GM12878 (cell line): ENCODE measurements at regions of chr1 and their contacts with region 1.

Region 1: DNA sequence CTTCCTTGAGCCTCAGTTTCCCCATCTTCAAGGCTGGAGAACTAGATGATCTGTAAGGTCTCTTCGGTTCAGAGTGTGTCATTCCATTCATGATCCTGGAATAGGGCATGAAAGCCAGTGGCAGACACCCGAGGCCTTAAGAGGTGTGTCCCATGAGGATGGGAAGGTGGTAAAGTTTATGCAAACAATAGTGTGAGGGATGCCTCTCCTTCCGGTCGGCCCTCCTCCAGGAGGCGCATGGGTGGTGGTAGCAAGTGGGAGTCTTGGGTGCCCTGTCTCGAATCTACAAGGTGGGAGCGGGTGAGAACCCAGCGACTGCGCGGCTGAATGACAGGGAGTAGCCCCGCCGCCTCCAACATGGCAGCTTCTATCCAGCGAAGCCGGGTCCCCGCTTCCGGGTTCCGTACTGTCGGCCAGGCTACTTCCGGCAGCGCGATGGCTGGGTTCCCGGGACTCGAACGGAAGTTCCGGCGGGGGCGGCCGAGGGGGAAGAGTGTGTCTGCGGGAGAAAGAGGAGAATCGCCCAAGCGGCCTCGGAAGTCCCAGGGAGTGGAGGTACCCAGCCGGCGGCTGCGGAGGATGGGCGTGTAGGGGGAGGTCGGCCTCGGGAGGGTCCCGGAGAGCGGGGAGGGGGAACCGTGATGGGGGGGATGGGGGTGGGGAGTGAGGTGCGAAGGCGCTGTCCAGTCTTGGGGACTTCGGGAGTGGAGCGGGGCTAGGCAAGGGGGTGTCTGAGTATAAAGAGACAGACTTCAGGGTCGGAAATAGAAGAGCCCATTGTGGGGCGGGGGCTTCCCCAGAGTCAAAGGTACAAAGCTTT is at the start of gene LYPLA2:
- DNase-seq: no peak
- ATAC-seq: peak; percentile 95
- H3K4me3 ChIP-seq: peak within 1 kb of the TSS; percentile 93
- H3K27ac ChIP-seq: peak within 1 kb of the TSS; percentile 71
- H3K4me1 ChIP-seq: 0 out of 2 replicates have a peak, but pooled peaks cover 5% of the 10 kb centered on the region
- H3K27me3 ChIP-seq: no peaks in the 10 kb centered on the region
- CTCF ChIP-seq: no peak
- EP300 ChIP-seq: no peak
- POLR2A ChIP-seq: peak; percentile 88
- RAD21 ChIP-seq: no peak
- polyA plus RNA-seq, gene LYPLA2: 2.7 to 5.9 TPM

Region 2: DNA sequence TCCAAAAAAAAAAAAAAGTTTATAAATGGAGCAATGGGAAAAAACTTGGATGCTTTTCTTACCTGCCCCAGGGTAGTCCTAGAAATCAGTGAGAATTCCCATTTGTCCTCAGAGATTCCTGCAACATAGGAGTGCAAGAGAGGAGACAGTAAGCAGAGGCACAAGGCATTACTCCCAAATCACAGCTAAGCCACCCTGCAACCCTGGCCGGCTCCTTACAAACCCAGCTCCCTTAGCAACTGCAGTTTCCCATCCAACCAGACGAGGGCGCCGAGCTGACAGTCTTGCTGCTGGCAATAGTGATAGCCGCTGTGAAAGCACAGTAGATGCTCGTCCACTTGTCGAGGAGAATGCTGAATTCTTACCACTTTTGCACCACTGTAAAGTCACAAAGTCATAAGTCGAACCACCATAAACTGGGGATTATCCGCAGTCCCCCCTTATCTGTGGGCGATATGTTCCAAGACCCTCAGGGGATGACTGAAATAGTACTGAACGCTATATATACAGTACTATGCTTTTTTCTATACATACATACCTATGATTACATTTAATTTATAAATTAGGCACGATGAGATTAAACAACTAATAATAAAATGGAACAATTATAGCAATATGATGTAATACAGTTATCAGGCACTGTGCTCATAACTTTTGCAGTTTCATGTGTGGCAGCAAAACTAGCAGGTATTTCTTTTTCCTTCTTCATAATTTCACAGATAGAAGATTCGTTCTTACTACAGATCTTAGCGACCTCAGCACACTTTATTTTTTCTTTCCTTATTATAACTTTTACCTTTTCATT is 18.7 kb before region 1 on chr1:
- CTCF ChIA-PET with region 1: interaction called, 10 read pairs
- POLR2A ChIA-PET with region 1: interaction called, 10 read pairs
- RAD21 ChIA-PET with region 1: interaction called, 7 read pairs
- SMC1A ChIA-PET with region 1: no interaction called
- in situ Hi-C with region 1: no loop called
- intact Hi-C with region 1: no loop called
- DNase-seq: peak; percentile 27
- ATAC-seq: peak; percentile 99
- H3K4me3 ChIP-seq: no peak overlapping the region
- H3K27ac ChIP-seq: no peak overlapping the region
- H3K4me1 ChIP-seq: peaks cover 12% of the 10 kb centered on the region
- H3K27me3 ChIP-seq: no peaks in the 10 kb centered on the region
- CTCF ChIP-seq: peak; percentile 97 to 98 (median 98); a peak in 5 of 6 replicates
- EP300 ChIP-seq: no peak
- POLR2A ChIP-seq: no peak
- RAD21 ChIP-seq: peak; percentile 91

Region 3: GRCh38 chr1:23777979-23778814 is 12.7 kb before region 1 on chr1 and contains the start of gene PITHD1:
- CTCF ChIA-PET with region 1: interaction called, 5 read pairs
- POLR2A ChIA-PET with region 1: interaction called, 10 read pairs
- RAD21 ChIA-PET with region 1: interaction called, 7 read pairs
- SMC1A ChIA-PET with region 1: interaction called, 4 read pairs
- in situ Hi-C with region 1: no loop called
- intact Hi-C with region 1: no loop called
- DNase-seq: peak; percentile 45
- ATAC-seq: peak; percentile 96
- H3K4me3 ChIP-seq: peak within 1 kb of the TSS; percentile 99
- H3K27ac ChIP-seq: peak within 1 kb of the TSS; percentile 82
- H3K4me1 ChIP-seq: peaks cover 10% of the 10 kb centered on the region; the same call in 1 of the 2 replicates
- H3K27me3 ChIP-seq: no peaks in the 10 kb centered on the region
- CTCF ChIP-seq: no peak
- EP300 ChIP-seq: no peak
- POLR2A ChIP-seq: peak; percentile 98
- RAD21 ChIP-seq: no peak
- polyA plus RNA-seq, gene PITHD1: 23.7 to 43.3 TPM

Region 4: GRCh38 chr1:23854568-23854967 is 63.7 kb after region 1 on chr1:
- CTCF ChIA-PET with region 1: no interaction called
- POLR2A ChIA-PET with region 1: no interaction called
- RAD21 ChIA-PET with region 1: no interaction called
- SMC1A ChIA-PET with region 1: no interaction called
- in situ Hi-C with region 1: no loop called
- intact Hi-C with region 1: no loop called
- DNase-seq: no peak
- ATAC-seq: peak; percentile 68
- H3K4me3 ChIP-seq: no peak overlapping the region
- H3K27ac ChIP-seq: no peak overlapping the region
- H3K4me1 ChIP-seq: no peaks in the 10 kb centered on the region
- H3K27me3 ChIP-seq: no peaks in the 10 kb centered on the region
- CTCF ChIP-seq: peak in 2 of 3 experiments; percentile 20 to 45; a peak in 3 of 6 replicates
- EP300 ChIP-seq: no peak
- POLR2A ChIP-seq: no peak
- RAD21 ChIP-seq: peak; percentile 35

Region 5: GRCh38 chr1:25239681-25240541 is 1449.0 kb after region 1 on chr1:
- CTCF ChIA-PET with region 1: no interaction called
- POLR2A ChIA-PET with region 1: no interaction called
- RAD21 ChIA-PET with region 1: no interaction called
- SMC1A ChIA-PET with region 1: no interaction called
- in situ Hi-C with region 1: loop called (anchors 25 kb)
- intact Hi-C with region 1: no loop called
- DNase-seq: peak; percentile 93
- ATAC-seq: peak; percentile 88
- H3K4me3 ChIP-seq: peak overlapping the region; percentile 55
- H3K27ac ChIP-seq: peak overlapping the region; percentile 88
- H3K4me1 ChIP-seq: peaks cover 22% of the 10 kb centered on the region
- H3K27me3 ChIP-seq: no peaks in the 10 kb centered on the region
- CTCF ChIP-seq: peak; percentile 67 to 82 (median 68)
- EP300 ChIP-seq: no peak
- POLR2A ChIP-seq: peak; percentile 83
- RAD21 ChIP-seq: peak; percentile 39; the same call in 1 of the 2 replicates